ENCODE measurements at regions of chr17 and their contacts with region 1.

Region 1: GRCh38 chr17:27381007-27381501 is 75.2 kb upstream of the KSR1 start:
- DNase-seq: peak; percentile 91
- CTCF ChIP-seq: peak; percentile 98

Region 2: GRCh38 chr17:27353461-27354050 is 27.5 kb before region 1 on chr17:
- CTCF ChIA-PET with region 1: interaction called, 23 read pairs
- POLR2A ChIA-PET with region 1: no interaction called
- DNase-seq: peak; percentile 97
- CTCF ChIP-seq: peak; percentile 92

Region 3: GRCh38 chr17:27455914-27456680 is 75.0 kb after region 1 on chr17 and contains the start of gene KSR1:
- CTCF ChIA-PET with region 1: no interaction called
- POLR2A ChIA-PET with region 1: no interaction called
- DNase-seq: peak; percentile 93
- CTCF ChIP-seq: peak; percentile 39

Measured in GM10248 (cell line).